ENCODE measurements at regions of chr17 and their contacts with region 1.

Region 1: GRCh38 chr17:1590031-1590748 is 27.6 kb upstream of the PITPNA start:
- DNase-seq: peak; percentile 95
- H3K4me3 ChIP-seq: no peak overlapping the region
- H3K27ac ChIP-seq: peak overlapping the region; percentile 73
- H3K4me1 ChIP-seq: peaks cover 18% of the 10 kb centered on the region
- H3K27me3 ChIP-seq: no peaks in the 10 kb centered on the region
- CTCF ChIP-seq: no peak
- POLR2A ChIP-seq: peak; percentile 58

Region 2: DNA sequence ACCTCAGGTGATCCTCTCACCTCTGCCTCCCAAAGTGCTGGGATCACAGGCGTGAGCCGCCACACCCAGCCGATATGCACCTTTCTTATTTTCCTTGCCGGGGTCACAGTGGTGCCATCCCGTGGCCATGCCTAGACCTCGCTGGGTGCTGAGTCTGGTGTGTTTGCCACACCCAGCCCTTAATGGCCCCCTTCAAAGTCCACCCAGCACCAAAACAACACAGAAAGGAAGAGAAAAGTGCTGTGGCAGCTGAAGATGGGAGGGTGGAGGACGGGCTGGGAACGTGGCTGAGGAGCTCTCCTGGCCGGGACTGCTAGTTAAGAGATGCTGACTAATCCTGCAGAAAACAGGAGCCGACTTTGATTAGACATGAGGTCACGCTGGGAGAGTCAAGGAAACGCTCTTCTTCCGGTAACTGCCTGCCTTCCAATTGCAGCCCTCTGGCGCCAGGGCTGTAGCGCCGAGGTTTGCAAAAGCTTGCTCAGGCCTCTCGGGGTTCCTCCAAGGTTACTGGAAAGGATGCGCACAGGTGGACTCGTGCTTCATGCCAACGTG is 27.5 kb after region 1 on chr17:
- CTCF ChIA-PET with region 1: interaction called, 14 read pairs
- POLR2A ChIA-PET with region 1: no interaction called
- dilution Hi-C with region 1: no loop called
- intact Hi-C with region 1: loop called (anchors 2 kb)
- DNase-seq: peak; percentile 87
- H3K4me3 ChIP-seq: no peak overlapping the region
- H3K27ac ChIP-seq: peak overlapping the region; percentile 80
- H3K4me1 ChIP-seq: peaks cover 19% of the 10 kb centered on the region
- H3K27me3 ChIP-seq: no peaks in the 10 kb centered on the region
- CTCF ChIP-seq: no peak
- POLR2A ChIP-seq: peak; percentile 52

Region 3: DNA sequence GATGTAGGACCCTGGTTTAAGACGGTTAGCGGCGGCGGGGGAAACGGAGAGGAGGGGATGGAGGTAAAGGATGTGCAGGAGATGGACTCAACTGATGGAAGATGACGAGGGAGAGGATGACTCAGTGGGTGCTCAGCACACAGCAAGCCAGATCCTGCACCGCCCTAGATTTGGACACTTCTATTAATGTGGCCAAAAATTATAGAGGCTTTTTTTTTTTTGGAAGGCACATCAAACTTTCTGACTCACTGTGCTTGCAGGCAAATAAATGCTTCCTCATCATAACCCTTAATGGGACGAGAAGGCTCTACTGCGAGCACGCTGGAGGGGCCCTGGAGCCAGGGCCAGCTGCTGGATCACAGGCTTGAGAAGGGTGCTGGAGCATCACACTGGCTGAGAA is 398.9 kb after region 1 on chr17:
- CTCF ChIA-PET with region 1: no interaction called
- POLR2A ChIA-PET with region 1: no interaction called
- dilution Hi-C with region 1: no loop called
- intact Hi-C with region 1: no loop called
- DNase-seq: no peak
- H3K4me3 ChIP-seq: no peak overlapping the region
- H3K27ac ChIP-seq: no peak overlapping the region
- H3K4me1 ChIP-seq: no peaks in the 10 kb centered on the region
- H3K27me3 ChIP-seq: peaks cover 0 to 1% of the 10 kb centered on the region in 2 experiments
- CTCF ChIP-seq: no peak
- POLR2A ChIP-seq: no peak